ENCODE measurements at regions of chr6 and their contacts with region 1.

Region 1: GRCh38 chr6:31541658-31542521 is at the start of gene DDX39B:
- DNase-seq: peak; percentile 98
- H3K4me3 Mint-ChIP-seq: peak within 1 kb of the TSS; percentile 70
- H3K27ac Mint-ChIP-seq: peak within 1 kb of the TSS; percentile 88
- H3K4me1 Mint-ChIP-seq: peaks cover 36% of the 10 kb centered on the region
- H3K27me3 Mint-ChIP-seq: no peaks in the 10 kb centered on the region
- CTCF ChIP-seq: peak; percentile 7
- total RNA-seq, gene DDX39B: 631 and 646 TPM in 2 replicates

Region 2: GRCh38 chr6:30883685-30884520 is 658.0 kb before region 1 on chr6 and contains the start of gene DDR1:
- CTCF ChIA-PET with region 1: no interaction called
- intact Hi-C with region 1: no loop called
- DNase-seq: peak; percentile 82
- H3K4me3 Mint-ChIP-seq: peak within 1 kb of the TSS; percentile 89
- H3K27ac Mint-ChIP-seq: peak within 1 kb of the TSS; percentile 94
- H3K4me1 Mint-ChIP-seq: peaks cover 63% of the 10 kb centered on the region
- H3K27me3 Mint-ChIP-seq: peaks cover 16% of the 10 kb centered on the region
- CTCF ChIP-seq: no peak
- total RNA-seq, gene DDR1: 489 and 580 TPM in 2 replicates

Region 3: GRCh38 chr6:31462964-31463870 is 78.7 kb before region 1 on chr6:
- CTCF ChIA-PET with region 1: no interaction called
- intact Hi-C with region 1: no loop called
- DNase-seq: peak; percentile 95
- H3K4me3 Mint-ChIP-seq: peak overlapping the region; percentile 78
- H3K27ac Mint-ChIP-seq: peak overlapping the region; percentile 74
- H3K4me1 Mint-ChIP-seq: peaks cover 21% of the 10 kb centered on the region
- H3K27me3 Mint-ChIP-seq: peaks cover 25% of the 10 kb centered on the region
- CTCF ChIP-seq: no peak

Region 4: DNA sequence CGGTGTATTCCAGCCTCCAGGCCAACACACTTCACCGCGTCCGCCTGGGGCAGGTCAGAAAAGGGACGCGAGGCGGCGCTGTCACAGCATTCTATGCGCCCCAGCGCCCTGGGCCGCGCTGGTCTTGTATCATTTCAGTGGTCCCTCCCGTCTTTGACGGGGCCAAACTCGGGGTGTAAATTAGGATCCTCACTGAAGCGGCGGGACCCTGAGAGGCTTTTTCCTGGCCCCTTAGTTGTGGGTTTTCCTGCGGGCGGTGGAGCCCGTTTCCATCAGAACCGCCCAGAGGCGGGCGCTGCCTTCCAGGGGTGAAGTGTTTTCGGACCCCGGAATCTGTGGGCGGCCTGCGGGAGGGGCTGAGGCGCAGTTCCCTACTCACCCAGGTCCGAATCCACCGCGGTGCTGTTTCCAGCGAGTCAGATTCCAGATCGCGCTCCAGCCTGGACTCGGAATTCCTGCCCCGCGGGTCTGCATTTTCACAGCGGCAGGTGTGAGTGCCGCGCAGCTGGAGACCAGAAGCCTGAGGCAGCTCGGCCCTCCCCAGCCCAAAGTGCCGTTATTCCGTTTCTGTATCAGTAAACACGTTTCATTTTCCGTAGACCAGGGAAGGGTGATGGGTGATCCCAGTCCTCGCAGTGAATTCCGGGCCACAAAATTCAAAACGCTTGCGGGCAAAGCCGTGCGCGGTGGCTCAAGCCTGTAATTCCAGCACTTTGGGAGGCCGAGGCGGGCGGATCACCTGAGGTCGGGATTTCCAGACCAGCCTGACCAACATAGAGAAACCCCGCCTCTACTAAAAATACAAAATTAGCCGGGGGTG is 47.8 kb before region 1 on chr6:
- CTCF ChIA-PET with region 1: interaction called, 11 read pairs
- intact Hi-C with region 1: loop called (anchors 1 kb)
- DNase-seq: peak; percentile 94
- H3K4me3 Mint-ChIP-seq: peak overlapping the region; percentile 56
- H3K27ac Mint-ChIP-seq: peak overlapping the region; percentile 0
- H3K4me1 Mint-ChIP-seq: peaks cover 42% of the 10 kb centered on the region
- H3K27me3 Mint-ChIP-seq: no peaks in the 10 kb centered on the region
- CTCF ChIP-seq: peak; percentile 78

Region 5: GRCh38 chr6:31529329-31530150 is 12.3 kb before region 1 on chr6:
- CTCF ChIA-PET with region 1: interaction called, 11 read pairs
- intact Hi-C with region 1: no loop called
- DNase-seq: no peak
- H3K4me3 Mint-ChIP-seq: no peak overlapping the region
- H3K27ac Mint-ChIP-seq: peak overlapping the region; percentile 22
- H3K4me1 Mint-ChIP-seq: peaks cover 32% of the 10 kb centered on the region
- H3K27me3 Mint-ChIP-seq: no peaks in the 10 kb centered on the region
- CTCF ChIP-seq: no peak

Measured in Calu3 (cell line).